ENCODE measurements at regions of chr2 and their contacts with region 1.

Region 1: DNA sequence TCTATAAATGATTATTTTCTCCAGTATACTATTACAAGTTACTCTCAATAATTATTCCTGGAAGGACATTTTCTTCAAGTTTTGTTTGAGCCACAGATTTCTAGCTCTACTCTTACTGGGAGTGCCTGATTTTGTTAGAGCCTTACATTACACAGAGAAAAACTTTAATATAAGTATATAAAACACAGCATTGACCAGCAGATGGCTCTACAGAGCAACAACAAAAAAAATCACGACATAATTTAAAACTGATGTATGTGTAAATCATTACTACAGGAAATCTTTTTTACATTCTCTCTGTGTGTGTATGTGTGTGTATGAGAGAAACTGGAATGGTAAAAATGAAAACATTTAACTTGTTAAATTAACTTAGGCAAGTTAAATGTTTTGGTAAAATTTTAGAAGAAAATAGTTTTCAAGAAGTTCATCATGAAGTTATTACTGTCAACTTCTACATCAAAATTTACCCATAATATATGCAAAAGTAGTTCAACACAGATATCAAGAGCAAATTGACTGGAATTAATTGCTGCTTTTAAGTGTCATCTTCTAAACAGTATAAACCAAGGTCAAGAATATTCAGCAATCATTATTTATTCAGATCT is 103.3 kb downstream of the MDH1 start:
- DNase-seq: peak; percentile 14
- ATAC-seq: no peak
- H3K4me3 Mint-ChIP-seq: no peak overlapping the region
- H3K27ac Mint-ChIP-seq: no peak overlapping the region
- H3K4me1 Mint-ChIP-seq: no peaks in the 10 kb centered on the region
- H3K27me3 Mint-ChIP-seq: no peaks in the 10 kb centered on the region

Region 2: GRCh38 chr2:63334910-63335309 is 357.2 kb before region 1 on chr2:
- CTCF ChIA-PET with region 1: no interaction called
- POLR2A ChIA-PET with region 1: no interaction called
- intact Hi-C with region 1: no loop called
- DNase-seq: no peak
- ATAC-seq: no peak
- H3K4me3 Mint-ChIP-seq: no peak overlapping the region
- H3K27ac Mint-ChIP-seq: no peak overlapping the region
- H3K4me1 Mint-ChIP-seq: no peaks in the 10 kb centered on the region
- H3K27me3 Mint-ChIP-seq: no peaks in the 10 kb centered on the region

Region 3: GRCh38 chr2:63723709-63724108 is 31.6 kb after region 1 on chr2:
- CTCF ChIA-PET with region 1: no interaction called
- POLR2A ChIA-PET with region 1: no interaction called
- intact Hi-C with region 1: no loop called
- DNase-seq: no peak
- ATAC-seq: no peak
- H3K4me3 Mint-ChIP-seq: no peak overlapping the region
- H3K27ac Mint-ChIP-seq: no peak overlapping the region
- H3K4me1 Mint-ChIP-seq: no peaks in the 10 kb centered on the region
- H3K27me3 Mint-ChIP-seq: no peaks in the 10 kb centered on the region

Region 4: DNA sequence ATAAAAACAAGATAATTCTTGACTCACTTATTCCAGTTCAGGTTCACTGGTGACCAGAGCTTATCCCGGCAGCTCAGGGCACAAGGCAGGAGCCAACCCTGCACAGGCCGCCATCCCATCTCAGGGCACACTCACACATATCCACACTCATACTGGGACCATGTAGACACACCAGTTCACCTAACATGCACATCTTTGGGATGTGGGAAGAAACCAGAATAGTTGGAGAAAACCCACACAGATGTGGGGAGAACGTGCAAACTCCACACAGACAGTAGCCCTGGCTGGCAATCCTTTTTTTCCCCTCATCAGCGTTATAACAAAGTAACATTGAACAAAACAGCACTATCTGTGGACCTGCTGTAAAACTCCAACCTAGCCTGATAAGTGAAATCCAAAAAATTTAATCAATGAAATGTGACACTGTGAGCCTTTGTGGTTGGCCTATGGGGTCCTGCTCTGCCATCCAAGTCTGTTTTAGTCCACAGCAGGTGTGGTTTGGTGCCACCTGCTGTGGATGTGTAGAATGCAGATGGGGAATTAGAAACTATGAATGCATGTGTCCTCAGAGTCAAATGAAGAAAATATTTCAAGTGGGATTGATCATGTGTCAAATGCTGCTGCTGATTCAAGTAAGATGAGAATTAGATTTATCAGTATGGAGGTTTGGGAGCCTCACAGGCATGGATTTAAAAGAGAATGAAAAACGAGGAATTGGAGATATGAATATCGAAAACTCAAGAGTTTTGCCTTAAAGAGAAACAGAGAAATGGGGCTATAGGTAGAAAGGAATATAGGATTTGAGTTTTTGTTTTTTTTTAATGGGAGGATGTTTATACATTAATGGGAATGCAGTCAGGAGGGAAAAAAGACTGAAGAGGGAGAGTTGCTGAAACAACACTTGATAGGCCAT is 196.6 kb after region 1 on chr2:
- CTCF ChIA-PET with region 1: interaction called, 5 read pairs
- POLR2A ChIA-PET with region 1: no interaction called
- intact Hi-C with region 1: loop called (anchors 1 kb)
- DNase-seq: peak; percentile 67
- ATAC-seq: peak; percentile 89
- H3K4me3 Mint-ChIP-seq: no peak overlapping the region
- H3K27ac Mint-ChIP-seq: peak overlapping the region; percentile 60
- H3K4me1 Mint-ChIP-seq: peaks cover 10% of the 10 kb centered on the region
- H3K27me3 Mint-ChIP-seq: no peaks in the 10 kb centered on the region

Measured in activated CD4-positive, alpha-beta T cell treated with anti-CD3 and anti-CD28 coated beads for 36 hours (primary cell).